ENCODE measurements at regions of chr5 and their contacts with region 1.

Region 1: DNA sequence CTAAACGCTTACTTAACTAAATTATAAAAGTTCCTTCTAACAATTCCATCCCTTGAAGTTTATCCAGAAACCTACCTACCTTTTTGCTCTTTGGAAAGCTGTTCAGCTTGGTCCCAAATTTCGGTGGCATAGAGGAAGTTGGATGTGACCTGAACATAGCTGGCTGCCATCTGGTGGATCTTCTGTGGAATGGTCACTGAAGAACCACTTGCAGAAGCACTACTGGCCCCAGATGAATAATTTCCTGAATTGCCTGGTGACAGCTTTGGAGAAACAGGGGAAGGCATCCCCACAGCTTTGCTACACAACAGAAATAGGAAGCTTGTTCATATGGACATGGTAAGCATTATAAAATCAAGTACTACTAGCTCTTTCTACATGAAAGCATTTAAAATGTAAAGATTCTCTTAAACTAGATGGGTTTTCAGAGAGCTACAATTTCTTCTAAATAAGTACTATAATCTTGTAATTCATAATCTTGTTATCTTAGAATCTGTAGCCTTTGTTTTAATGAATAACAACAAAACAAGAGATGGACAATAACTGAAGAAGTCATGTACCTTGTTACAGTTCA is 9.9 kb downstream of the LEAP2 start:
- DNase-seq: peak; percentile 25
- ATAC-seq: peak; percentile 67
- H3K4me3 Mint-ChIP-seq: no peak overlapping the region
- H3K27ac Mint-ChIP-seq: no peak overlapping the region
- H3K4me1 Mint-ChIP-seq: peaks cover 5% of the 10 kb centered on the region
- H3K27me3 Mint-ChIP-seq: no peaks in the 10 kb centered on the region
- CTCF ChIP-seq: peak; percentile 53

Region 2: GRCh38 chr5:132873119-132873929 is 10.0 kb before region 1 on chr5 and contains the start of gene LEAP2:
- CTCF ChIA-PET with region 1: interaction called, 23 read pairs
- POLR2A ChIA-PET with region 1: interaction called, 9 read pairs
- intact Hi-C with region 1: no loop called
- DNase-seq: no peak
- ATAC-seq: no peak
- H3K4me3 Mint-ChIP-seq: no peak within 1 kb of the TSS
- H3K27ac Mint-ChIP-seq: no peak within 1 kb of the TSS
- H3K4me1 Mint-ChIP-seq: peaks cover 8% of the 10 kb centered on the region
- H3K27me3 Mint-ChIP-seq: no peaks in the 10 kb centered on the region
- CTCF ChIP-seq: no peak
- total RNA-seq, gene LEAP2: 3.0 to 3.5 TPM

Region 3: DNA sequence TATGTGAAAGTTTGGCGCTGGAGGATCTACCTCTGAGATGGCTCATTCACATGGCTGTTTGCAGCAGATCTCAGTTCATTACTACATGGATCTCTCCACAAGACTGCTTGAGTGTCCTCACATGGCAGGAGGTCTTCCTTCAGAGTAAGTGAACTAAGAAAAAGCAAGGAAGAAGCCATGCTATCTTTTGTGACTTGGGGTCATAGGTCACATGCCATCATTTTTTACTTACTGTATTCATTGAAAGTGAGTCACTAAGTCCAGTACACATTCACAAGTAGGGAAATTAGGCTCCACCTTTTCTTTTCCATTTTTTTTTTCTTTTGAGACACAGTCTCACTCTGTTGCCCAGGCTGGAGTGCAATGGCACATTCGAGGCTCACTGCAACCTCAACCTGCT is 1537.0 kb after region 1 on chr5:
- CTCF ChIA-PET with region 1: no interaction called
- POLR2A ChIA-PET with region 1: no interaction called
- intact Hi-C with region 1: no loop called
- DNase-seq: no peak
- ATAC-seq: no peak
- H3K4me3 Mint-ChIP-seq: no peak overlapping the region
- H3K27ac Mint-ChIP-seq: no peak overlapping the region
- H3K4me1 Mint-ChIP-seq: no peaks in the 10 kb centered on the region
- H3K27me3 Mint-ChIP-seq: no peaks in the 10 kb centered on the region
- CTCF ChIP-seq: no peak